ENCODE measurements at regions of chr14 and their contacts with region 1.

Region 1: DNA sequence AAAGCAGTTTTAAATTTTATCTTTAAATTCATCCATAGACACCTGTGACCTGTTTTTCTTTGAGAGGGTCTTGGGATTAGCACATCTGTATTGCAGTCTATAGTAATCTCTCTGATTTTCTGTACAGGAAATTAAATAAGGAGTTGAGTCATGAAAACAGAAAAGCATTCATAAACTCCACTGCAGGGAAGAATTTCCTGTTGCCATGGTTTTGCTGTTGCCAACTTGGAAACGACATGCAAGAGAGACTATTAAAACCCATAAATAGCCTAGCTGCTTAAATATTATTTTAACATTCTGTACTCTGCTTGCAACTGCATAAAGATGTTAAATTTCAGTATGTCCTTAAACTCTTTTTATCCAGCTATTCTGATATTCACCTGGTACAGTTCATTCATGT is 281.0 kb upstream of the RGS6 start:
- DNase-seq: no peak
- ATAC-seq: no peak

Region 2: DNA sequence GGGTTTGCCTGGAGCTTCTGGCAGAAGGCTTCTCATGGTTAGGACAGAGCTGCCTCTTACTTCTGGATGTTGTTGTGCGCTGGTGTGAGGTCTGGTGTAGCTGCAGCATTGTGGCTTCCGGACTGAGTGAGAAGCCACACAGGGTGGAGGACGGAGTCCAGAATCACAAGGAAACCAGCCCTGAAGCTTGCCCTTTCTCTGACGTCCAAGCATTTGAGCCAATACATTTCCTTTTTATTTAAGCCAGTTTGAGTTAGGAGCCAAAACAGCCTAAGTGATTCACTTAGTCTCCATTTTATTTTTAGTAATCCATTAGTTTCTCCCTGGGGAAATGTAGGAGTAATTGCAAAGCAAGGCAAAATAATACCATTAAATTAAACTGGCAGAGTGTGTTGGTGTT is 121.4 kb before region 1 on chr14:
- intact Hi-C with region 1: loop called (anchors 10 kb)
- DNase-seq: no peak
- ATAC-seq: no peak

Measured in Right ventricle myocardium inferior (tissue), 1 donor.